ENCODE measurements at regions of chr3 and their contacts with region 1.

Region 1: DNA sequence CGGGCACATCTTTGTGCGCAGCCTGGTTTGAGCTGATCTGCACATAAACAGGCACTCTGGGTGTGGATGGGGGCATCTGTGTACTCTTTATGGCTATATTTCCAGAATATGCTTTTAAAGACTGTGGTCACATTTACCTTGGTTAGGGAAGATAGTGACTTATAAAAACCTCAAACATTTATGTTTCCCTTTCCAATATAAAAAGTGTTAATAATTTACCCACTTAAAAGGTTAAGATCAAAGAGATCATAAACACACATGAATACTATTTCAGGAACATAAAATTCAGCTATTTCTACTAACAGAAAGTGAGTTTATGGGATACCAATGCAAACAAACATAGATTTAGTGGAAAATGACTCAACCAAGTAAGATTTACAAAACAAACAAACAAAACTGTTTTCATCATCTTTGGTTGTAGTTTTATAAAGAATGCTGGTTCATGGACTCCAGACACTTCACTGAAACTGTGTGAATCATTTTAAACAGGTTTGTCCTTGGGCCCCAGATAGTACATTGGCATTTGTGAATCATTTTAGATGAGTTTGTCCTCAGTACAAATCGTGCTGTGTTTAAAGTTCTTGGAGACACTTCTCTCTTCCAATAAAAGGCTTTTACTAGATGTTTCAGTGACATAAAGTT is 253.5 kb upstream of the CTDSPL start:
- DNase-seq: peak; percentile 94
- ATAC-seq: peak; percentile 93
- H3K4me3 ChIP-seq: no peak overlapping the region
- H3K27ac ChIP-seq: peak overlapping the region; percentile 19; the same call in 1 of the 2 replicates
- H3K4me1 ChIP-seq: peaks cover 21% of the 10 kb centered on the region
- H3K27me3 ChIP-seq: peaks cover 55% of the 10 kb centered on the region
- CTCF ChIP-seq: no peak

Region 2: DNA sequence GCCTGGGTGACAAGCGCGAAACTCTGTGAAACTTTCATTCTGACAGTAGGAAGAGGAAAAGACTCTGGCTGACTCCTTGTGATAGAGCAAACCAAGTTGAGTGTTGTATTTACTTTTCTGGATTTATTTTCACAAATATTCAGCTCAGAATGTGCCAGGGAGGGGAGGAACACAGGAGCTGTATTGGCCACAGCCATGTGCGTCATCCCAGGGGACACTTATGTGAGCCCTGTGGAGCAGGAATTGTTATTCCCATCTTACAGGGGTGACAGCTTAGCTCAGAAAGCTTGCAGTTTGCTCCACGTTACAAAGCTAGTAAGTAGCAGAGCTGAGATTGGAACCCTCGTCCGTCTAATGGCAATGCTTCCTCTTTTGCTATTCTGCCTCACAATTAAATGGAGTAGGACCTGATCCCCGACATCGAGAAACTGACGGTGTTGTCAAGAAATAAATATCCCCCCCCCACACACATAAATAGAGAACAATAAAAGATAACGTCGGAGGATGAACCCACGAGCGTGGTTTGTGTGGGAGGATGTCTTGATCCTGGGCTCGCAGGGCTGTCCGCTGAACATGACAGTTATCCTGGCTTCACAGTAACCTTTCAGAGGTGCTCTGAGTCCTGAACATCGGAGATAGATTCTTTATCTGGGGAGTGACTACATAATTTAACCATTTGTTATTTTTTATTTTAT is 101.9 kb after region 1 on chr3:
- CTCF ChIA-PET with region 1: no interaction called
- POLR2A ChIA-PET with region 1: no interaction called
- intact Hi-C with region 1: loop called (anchors 2 kb)
- DNase-seq: no peak
- ATAC-seq: no peak
- H3K4me3 ChIP-seq: no peak overlapping the region
- H3K27ac ChIP-seq: no peak overlapping the region
- H3K4me1 ChIP-seq: peaks cover 4% of the 10 kb centered on the region; the same call in 1 of the 2 replicates
- H3K27me3 ChIP-seq: peaks cover 70% of the 10 kb centered on the region
- CTCF ChIP-seq: no peak

Region 3: GRCh38 chr3:37779289-37780152 is 171.3 kb after region 1 on chr3:
- CTCF ChIA-PET with region 1: no interaction called
- POLR2A ChIA-PET with region 1: no interaction called
- intact Hi-C with region 1: loop called (anchors 1 kb)
- DNase-seq: peak; percentile 84
- ATAC-seq: peak; percentile 93
- H3K4me3 ChIP-seq: no peak overlapping the region
- H3K27ac ChIP-seq: no peak overlapping the region
- H3K4me1 ChIP-seq: no peaks in the 10 kb centered on the region
- H3K27me3 ChIP-seq: peaks cover 38% of the 10 kb centered on the region
- CTCF ChIP-seq: peak; percentile 87